ENCODE measurements at regions of chr7 and their contacts with region 1.

Region 1: GRCh38 chr7:149090397-149091195 is at the start of gene ZNF786:
- DNase-seq: peak; percentile 96 to 99 (median 98)
- ATAC-seq: peak; percentile 93
- H3K4me3 ChIP-seq: peak within 1 kb of the TSS; percentile 93
- H3K27ac ChIP-seq: peak within 1 kb of the TSS; percentile 74
- H3K4me1 ChIP-seq: peaks cover 7 to 29% of the 10 kb centered on the region in 2 experiments
- H3K27me3 ChIP-seq: no peaks in the 10 kb centered on the region
- CTCF ChIP-seq: peak; percentile 97 to 98 (median 98)
- EP300 ChIP-seq: peak; percentile 57
- POLR2A ChIP-seq: peak; percentile 87
- RAD21 ChIP-seq: peak; percentile 92 to 98
- polyA plus RNA-seq, gene ZNF786: 0.31 to 0.49 TPM

Region 2: DNA sequence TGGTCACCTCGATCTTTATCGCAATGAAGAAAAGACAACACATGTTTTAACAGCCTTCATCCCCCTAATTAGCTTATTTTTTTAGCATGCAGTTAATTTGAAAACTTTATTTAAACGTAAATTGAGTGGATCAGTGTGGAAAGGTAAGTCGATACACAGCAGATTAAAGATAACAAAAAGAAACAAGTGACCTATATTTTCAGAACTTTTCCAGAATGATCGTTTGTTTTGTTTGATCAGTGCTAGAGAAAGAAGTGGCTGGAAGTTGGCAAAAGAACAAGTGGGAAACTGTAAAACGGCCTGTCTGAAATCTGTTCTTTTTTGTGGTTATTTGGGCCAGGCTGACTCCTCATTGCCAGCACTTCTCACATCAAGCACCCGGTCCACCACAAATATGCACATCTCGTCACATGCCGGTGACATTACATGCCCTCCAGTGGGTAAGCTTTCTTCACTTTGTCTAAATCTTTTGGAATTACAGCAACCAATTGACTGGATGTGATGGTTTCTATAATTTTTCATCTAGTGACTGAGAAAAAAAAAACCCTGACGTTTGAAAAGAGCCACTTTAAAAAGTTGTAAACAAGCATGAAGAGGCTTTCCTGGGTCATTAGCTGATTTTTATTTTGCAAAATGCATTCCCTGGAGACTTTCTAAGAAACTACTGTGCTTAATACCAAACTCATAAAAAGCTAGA is 466.9 kb before region 1 on chr7:
- CTCF ChIA-PET with region 1: no interaction called
- POLR2A ChIA-PET with region 1: no interaction called
- in situ Hi-C with region 1: no loop called
- intact Hi-C with region 1: no loop called
- DNase-seq: no peak
- ATAC-seq: no peak
- H3K4me3 ChIP-seq: no peak overlapping the region
- H3K27ac ChIP-seq: no peak overlapping the region
- H3K4me1 ChIP-seq: no peaks in the 10 kb centered on the region; a peak in 1 of 5 replicates
- H3K27me3 ChIP-seq: peaks cover 36 to 50% of the 10 kb centered on the region in 2 experiments
- CTCF ChIP-seq: no peak
- EP300 ChIP-seq: no peak
- POLR2A ChIP-seq: no peak
- RAD21 ChIP-seq: no peak

Region 3: DNA sequence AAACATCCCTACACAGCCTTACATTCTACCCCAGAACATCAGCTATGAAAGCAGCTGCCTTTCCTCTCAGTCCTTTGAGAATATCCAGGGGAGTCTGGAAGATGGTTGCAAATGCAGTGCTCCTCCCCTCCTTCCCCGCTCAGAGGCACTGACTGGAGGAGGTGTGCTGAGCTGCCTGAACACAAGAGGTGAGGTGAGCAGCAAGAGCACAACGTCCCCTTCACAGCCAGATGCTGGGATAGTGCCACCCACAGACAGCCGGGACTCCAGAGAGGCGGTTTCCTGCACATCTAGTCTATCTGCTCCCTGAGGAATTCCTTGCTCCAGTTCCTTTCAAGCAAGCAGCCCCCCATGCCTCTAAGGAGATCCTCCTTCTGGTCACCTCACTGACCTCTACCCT is 280.7 kb before region 1 on chr7:
- CTCF ChIA-PET with region 1: no interaction called
- POLR2A ChIA-PET with region 1: no interaction called
- in situ Hi-C with region 1: no loop called
- intact Hi-C with region 1: loop called (anchors 10 kb)
- DNase-seq: no peak
- ATAC-seq: no peak
- H3K4me3 ChIP-seq: no peak overlapping the region
- H3K27ac ChIP-seq: no peak overlapping the region
- H3K4me1 ChIP-seq: no peaks in the 10 kb centered on the region
- H3K27me3 ChIP-seq: no peaks in the 10 kb centered on the region
- CTCF ChIP-seq: no peak
- EP300 ChIP-seq: no peak
- POLR2A ChIP-seq: no peak
- RAD21 ChIP-seq: no peak

Region 4: DNA sequence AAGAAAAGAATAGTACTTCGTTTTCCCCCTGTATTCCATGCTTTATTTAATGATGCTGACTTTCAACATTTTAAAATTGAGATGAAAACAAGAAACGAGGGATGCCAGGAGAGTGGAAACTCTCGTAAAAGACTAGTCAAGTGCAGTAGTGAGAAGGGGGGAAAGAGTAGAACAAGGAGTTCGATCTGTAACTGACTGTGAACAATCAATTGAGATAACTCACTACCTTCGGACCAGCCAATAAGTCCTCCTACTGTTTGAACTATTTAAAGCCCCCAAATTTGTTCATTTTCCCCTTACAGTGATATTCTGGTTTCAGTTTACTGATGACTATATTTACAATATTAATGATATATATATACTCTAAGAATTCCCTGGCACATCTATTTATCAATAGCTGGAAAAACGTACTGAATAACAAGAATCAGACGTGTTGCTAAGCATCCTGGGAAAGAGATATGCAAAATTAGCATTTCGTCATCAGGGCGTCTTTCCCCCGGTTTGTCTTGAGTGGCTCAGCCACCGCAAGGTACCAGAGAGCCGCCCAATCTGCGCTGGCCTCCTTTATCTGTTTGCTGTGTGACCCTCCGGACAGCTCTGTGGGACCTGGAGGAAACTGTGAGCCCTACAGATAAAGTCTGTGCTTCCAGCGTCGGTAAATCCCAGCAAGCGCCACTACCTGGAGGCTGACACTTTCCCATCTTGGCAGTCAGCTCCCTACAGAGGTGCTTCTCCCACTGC is 103.4 kb before region 1 on chr7:
- CTCF ChIA-PET with region 1: no interaction called
- POLR2A ChIA-PET with region 1: interaction called, 4 read pairs
- in situ Hi-C with region 1: no loop called
- intact Hi-C with region 1: loop called (anchors 5 kb)
- DNase-seq: peak; percentile 97 to 98 (median 98)
- ATAC-seq: peak; percentile 88
- H3K4me3 ChIP-seq: peak overlapping the region; percentile 53
- H3K27ac ChIP-seq: peak overlapping the region; percentile 75
- H3K4me1 ChIP-seq: peaks cover 10 to 27% of the 10 kb centered on the region in 2 experiments; a peak in 4 of 5 replicates
- H3K27me3 ChIP-seq: no peaks in the 10 kb centered on the region
- CTCF ChIP-seq: no peak; a peak in 1 of 6 replicates
- EP300 ChIP-seq: no peak; the same call in none of the 2 replicates
- POLR2A ChIP-seq: no peak
- RAD21 ChIP-seq: peak; percentile 5 to 13; a peak in 2 of 4 replicates

Region 5: DNA sequence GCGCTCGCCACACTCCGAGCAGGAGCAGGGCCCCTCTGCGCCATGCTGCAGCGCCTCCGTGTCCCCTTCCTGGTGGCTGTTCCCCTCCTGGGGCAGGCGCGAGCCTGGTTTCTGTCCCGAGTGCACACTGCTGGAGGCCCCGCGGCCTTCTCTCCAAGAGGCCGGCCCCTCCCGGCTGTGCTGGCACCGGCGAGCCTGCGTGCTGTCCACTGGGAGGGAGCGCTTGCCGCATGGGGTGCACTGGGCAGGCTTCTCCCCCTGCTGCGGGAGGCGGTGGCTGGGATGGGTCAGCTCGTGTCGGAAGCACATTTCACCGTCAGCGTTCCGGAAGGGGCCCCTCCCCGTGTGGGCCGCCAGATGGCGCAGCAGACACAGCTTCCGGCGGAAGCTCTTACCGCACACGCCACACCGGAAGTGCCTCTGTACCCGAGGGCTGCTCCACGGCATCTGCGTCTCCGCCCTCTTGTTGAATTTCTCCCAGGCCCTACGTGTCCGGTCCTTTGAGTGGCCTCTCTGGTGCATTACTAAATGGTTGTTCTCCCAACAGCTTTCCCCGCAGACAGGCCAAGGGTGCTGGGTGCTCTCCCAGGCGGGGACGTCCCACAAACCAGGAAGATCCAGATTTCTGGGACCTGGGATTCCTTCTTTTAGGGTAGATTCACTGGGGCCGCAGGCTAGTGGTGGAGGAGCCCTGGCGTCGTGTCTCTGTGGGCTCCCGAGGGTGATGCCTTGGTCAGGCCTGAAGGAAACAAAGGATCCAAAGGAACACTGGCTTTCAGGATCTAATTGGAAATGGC is 18.8 kb before region 1 on chr7:
- CTCF ChIA-PET with region 1: no interaction called
- POLR2A ChIA-PET with region 1: no interaction called
- in situ Hi-C with region 1: no loop called
- intact Hi-C with region 1: loop called (anchors 2 kb)
- DNase-seq: peak in 3 of 4 experiments; percentile 24 to 48 (median 33)
- ATAC-seq: peak; percentile 74
- H3K4me3 ChIP-seq: no peak overlapping the region
- H3K27ac ChIP-seq: no peak overlapping the region
- H3K4me1 ChIP-seq: peaks cover 0 to 12% of the 10 kb centered on the region in 2 experiments; a peak in 1 of 5 replicates
- H3K27me3 ChIP-seq: no peaks in the 10 kb centered on the region
- CTCF ChIP-seq: peak; percentile 42 to 50 (median 50); a peak in 5 of 6 replicates
- EP300 ChIP-seq: no peak
- POLR2A ChIP-seq: no peak
- RAD21 ChIP-seq: peak in 1 of 2 experiments; percentile 48; a peak in 2 of 4 replicates